Common myeloid progenitor, CD34-positive (primary cell): ENCODE measurements at regions of chr9 and their contacts with region 1.

Region 1: GRCh38 chr9:36136272-36136893 is at the start of gene GLIPR2:
- DNase-seq: peak in 2 of 3 donors; percentile 64 to 78
- H3K4me3 ChIP-seq: peak within 1 kb of the TSS; percentile 67 to 85 (median 75)
- H3K27ac ChIP-seq: no peak within 1 kb of the TSS
- H3K4me1 ChIP-seq: peaks cover 0 to 51% (median 45%) of the 10 kb centered on the region in 4 experiments
- H3K27me3 ChIP-seq: peaks cover 0 to 17% (median 2%) of the 10 kb centered on the region in 5 experiments

Region 2: DNA sequence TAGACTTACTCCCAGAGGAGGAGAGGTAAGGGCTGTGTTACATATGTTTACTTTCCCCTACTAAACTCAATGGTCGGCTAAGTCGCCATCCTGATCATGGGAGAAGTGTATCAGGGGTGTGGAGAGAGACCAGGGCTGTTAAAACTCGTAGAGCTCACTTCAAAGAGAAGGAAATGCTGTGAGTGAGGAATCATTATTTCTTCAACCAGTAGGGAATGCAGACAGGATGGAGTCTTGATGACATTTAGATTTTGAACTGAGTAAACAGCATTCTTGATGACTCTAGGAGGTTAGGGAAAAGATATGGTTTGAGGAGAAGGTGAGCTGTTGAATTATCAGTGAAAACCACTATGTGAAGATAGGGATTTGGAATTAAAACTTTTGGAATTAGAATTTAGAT is 82.4 kb before region 1 on chr9:
- CTCF ChIA-PET with region 1: no interaction called
- POLR2A ChIA-PET with region 1: no interaction called
- DNase-seq: no peak
- H3K4me3 ChIP-seq: no peak overlapping the region
- H3K27ac ChIP-seq: no peak overlapping the region
- H3K4me1 ChIP-seq: no peaks in the 10 kb centered on the region
- H3K27me3 ChIP-seq: no peaks in the 10 kb centered on the region

Region 3: DNA sequence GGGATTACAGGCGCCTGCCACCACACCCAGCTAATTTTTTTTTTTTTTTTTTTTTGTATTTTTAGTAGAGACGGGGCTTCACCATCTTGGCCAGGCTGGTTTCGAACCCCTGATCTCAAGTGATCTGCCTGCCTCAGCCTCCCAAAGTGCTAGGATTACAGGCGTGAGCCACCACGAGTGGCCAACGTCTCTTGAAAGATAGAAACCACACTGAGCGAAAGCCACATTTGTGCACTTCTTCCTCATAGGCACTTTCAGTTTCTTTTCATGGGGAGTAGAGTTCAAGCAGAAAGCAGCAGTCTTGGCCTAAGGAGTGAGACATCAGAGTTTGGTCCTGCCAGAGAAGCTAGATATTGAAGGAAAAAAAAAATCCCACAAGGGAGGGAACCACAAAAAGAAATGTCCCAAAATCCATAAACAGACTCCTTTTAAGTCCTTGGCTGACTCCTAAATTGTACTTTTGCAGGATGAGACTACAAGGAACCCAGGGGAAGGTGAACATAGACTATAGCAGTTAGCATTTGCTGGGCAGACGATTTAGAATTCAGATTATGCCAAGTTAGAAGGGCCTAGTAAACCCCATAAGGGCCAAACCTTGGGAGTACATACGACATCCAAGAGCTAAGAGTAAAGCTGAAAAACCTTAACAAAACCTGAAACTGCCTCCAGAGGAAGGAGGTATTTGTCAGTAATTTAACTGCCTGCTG is 43.7 kb before region 1 on chr9:
- CTCF ChIA-PET with region 1: no interaction called
- POLR2A ChIA-PET with region 1: no interaction called
- DNase-seq: peak in 2 of 3 donors; percentile 62 to 63
- H3K4me3 ChIP-seq: peak overlapping the region in 1 of 7 experiments; percentile 5
- H3K27ac ChIP-seq: no peak overlapping the region
- H3K4me1 ChIP-seq: peaks cover 0 to 6% (median 0%) of the 10 kb centered on the region in 4 experiments
- H3K27me3 ChIP-seq: no peaks in the 10 kb centered on the region

Region 4: DNA sequence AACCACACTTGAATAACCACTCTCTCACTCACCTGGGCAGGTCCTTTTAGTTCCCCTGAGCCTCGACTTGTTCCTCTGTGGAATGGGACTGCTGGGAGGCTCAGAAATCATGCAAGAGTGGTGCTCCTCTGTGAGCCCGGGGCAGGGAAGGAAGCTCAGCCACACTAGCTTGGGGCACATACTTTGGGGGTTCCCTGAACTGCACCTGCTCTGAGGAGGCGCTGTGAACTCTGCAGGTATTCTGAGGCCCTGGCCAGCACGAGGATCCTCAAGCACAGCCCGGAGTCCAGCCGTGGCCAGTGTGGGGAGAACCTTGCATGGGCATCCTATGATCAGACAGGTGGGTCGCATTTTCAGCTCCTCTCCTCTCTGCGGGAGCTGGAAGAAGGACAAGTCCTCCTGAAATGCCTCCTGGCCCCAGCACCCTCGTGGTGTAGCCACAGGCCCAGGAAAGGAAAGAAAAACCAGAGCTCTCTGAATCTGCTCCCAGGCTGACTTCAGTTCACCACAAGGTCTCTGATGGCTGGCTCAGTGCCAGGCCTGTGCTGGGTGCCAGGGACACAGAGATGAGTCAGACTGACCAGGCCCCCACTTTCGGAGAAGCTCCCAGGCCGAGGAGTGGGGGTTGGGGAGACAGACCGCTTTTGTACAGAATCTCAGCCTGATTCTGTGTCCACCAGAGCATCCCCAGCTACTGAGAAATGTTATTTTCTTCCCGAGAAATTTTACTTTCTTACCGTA is 12.1 kb after region 1 on chr9:
- CTCF ChIA-PET with region 1: interaction called, 106 read pairs
- POLR2A ChIA-PET with region 1: interaction called, 6 read pairs
- DNase-seq: peak in 2 of 3 donors; percentile 56 to 64
- H3K4me3 ChIP-seq: no peak overlapping the region
- H3K27ac ChIP-seq: no peak overlapping the region
- H3K4me1 ChIP-seq: peaks cover 21 to 75% (median 60%) of the 10 kb centered on the region in 4 experiments
- H3K27me3 ChIP-seq: no peaks in the 10 kb centered on the region

Region 5: GRCh38 chr9:36177571-36177970 is 41.2 kb after region 1 on chr9:
- CTCF ChIA-PET with region 1: no interaction called
- POLR2A ChIA-PET with region 1: no interaction called
- DNase-seq: no peak
- H3K4me3 ChIP-seq: no peak overlapping the region
- H3K27ac ChIP-seq: no peak overlapping the region
- H3K4me1 ChIP-seq: no peaks in the 10 kb centered on the region
- H3K27me3 ChIP-seq: no peaks in the 10 kb centered on the region

Region 6: GRCh38 chr9:36218411-36218901 is 82.1 kb after region 1 on chr9:
- CTCF ChIA-PET with region 1: no interaction called
- POLR2A ChIA-PET with region 1: no interaction called
- DNase-seq: peak in 2 of 3 donors; percentile 22 to 29
- H3K4me3 ChIP-seq: peak overlapping the region in 1 of 7 experiments; percentile 22
- H3K27ac ChIP-seq: peak overlapping the region in 1 of 2 experiments; percentile 17
- H3K4me1 ChIP-seq: peaks cover 0 to 27% (median 16%) of the 10 kb centered on the region in 4 experiments
- H3K27me3 ChIP-seq: no peaks in the 10 kb centered on the region